ENCODE measurements at regions of chr7 and their contacts with region 1.

Region 1: DNA sequence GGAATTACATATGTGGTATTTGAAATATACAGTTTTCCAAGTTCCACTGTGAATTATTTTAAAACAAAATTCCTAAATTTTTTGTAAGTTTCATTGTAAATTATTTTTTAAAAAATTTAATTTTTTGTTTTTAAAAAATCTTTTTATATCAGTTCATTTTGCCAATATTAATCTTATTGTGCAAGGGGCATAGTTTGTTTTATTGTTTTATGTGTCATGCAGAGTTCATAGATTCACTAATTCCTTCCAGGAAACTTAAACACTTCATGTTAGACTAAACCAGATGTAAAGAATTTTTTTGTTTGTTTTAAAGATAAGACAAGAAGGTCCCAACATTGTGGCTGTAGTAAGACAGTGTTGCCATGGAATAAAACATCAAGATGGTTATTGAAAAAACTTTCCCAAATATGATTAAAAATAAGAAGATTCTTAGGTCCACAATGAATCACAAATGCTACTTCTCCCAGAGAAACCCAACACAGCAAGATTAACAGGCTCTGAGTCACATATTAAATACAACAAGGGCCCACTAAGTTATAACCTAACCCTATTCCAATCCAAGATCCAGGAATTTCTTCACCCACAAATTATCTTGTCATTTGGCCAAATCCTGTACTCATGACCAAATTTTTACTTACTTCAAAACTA is 464.7 kb upstream of the IGFBP3 start:
- DNase-seq: peak; percentile 96
- ATAC-seq: peak; percentile 92
- H3K4me3 ChIP-seq: no peak overlapping the region
- H3K27ac ChIP-seq: no peak overlapping the region; the same call in 1 of the 2 replicates
- H3K4me1 ChIP-seq: peaks cover 10% of the 10 kb centered on the region; the same call in 1 of the 2 replicates
- H3K27me3 ChIP-seq: no peaks in the 10 kb centered on the region
- CTCF ChIP-seq: no peak
- POLR2A ChIP-seq: no peak
- RAD21 ChIP-seq: no peak; the same call in 1 of the 2 replicates

Region 2: GRCh38 chr7:46173476-46174195 is 212.2 kb before region 1 on chr7:
- CTCF ChIA-PET with region 1: no interaction called
- POLR2A ChIA-PET with region 1: no interaction called
- dilution Hi-C with region 1: no loop called
- in situ Hi-C with region 1: no loop called
- intact Hi-C with region 1: no loop called
- DNase-seq: no peak
- ATAC-seq: peak; percentile 53
- H3K4me3 ChIP-seq: no peak overlapping the region
- H3K27ac ChIP-seq: no peak overlapping the region
- H3K4me1 ChIP-seq: peaks cover 11% of the 10 kb centered on the region
- H3K27me3 ChIP-seq: no peaks in the 10 kb centered on the region
- CTCF ChIP-seq: no peak
- POLR2A ChIP-seq: no peak
- RAD21 ChIP-seq: no peak

Region 3: GRCh38 chr7:46454816-46455215 is 69.0 kb after region 1 on chr7:
- CTCF ChIA-PET with region 1: no interaction called
- POLR2A ChIA-PET with region 1: no interaction called
- dilution Hi-C with region 1: no loop called
- in situ Hi-C with region 1: no loop called
- intact Hi-C with region 1: loop called (anchors 1 kb)
- DNase-seq: peak; percentile 7
- ATAC-seq: no peak
- H3K4me3 ChIP-seq: no peak overlapping the region
- H3K27ac ChIP-seq: no peak overlapping the region
- H3K4me1 ChIP-seq: peaks cover 8% of the 10 kb centered on the region; the same call in 1 of the 2 replicates
- H3K27me3 ChIP-seq: no peaks in the 10 kb centered on the region
- CTCF ChIP-seq: no peak
- POLR2A ChIP-seq: no peak
- RAD21 ChIP-seq: no peak

Measured in IMR-90 (cell line).